ENCODE measurements at regions of chr18 and their contacts with region 1.

Region 1: DNA sequence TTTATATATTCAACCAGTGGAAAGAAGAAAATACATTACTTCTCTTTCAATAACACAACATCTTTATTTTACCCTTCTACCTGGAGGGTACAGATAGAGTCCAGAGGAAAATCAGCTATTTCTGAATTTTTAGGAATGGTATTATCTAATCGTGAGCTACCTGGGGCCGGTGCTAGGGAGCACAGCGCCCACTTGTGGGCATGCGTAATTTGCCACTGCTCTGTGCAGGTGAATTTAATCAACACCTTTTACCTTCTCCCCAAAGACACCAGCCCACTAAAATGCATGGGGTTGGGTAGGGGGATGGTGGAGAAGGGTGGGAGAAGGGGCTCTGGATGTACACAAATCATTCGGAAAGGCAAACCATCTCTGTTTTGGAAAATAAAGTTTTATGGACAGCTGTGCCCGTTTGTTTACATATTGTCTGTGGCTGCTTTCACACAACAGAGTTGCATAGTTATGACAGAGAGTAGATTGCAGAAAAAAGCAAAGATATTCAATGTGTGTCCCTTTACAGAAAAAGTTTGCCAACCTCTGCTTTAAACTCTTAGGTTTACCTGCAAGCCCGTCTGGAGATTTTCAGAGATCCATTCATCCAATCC is 51.5 kb upstream of the DCC start:
- DNase-seq: peak; percentile 33
- H3K4me3 Mint-ChIP-seq: no peak overlapping the region
- H3K27ac Mint-ChIP-seq: no peak overlapping the region
- H3K4me1 Mint-ChIP-seq: no peaks in the 10 kb centered on the region
- H3K27me3 Mint-ChIP-seq: no peaks in the 10 kb centered on the region

Region 2: DNA sequence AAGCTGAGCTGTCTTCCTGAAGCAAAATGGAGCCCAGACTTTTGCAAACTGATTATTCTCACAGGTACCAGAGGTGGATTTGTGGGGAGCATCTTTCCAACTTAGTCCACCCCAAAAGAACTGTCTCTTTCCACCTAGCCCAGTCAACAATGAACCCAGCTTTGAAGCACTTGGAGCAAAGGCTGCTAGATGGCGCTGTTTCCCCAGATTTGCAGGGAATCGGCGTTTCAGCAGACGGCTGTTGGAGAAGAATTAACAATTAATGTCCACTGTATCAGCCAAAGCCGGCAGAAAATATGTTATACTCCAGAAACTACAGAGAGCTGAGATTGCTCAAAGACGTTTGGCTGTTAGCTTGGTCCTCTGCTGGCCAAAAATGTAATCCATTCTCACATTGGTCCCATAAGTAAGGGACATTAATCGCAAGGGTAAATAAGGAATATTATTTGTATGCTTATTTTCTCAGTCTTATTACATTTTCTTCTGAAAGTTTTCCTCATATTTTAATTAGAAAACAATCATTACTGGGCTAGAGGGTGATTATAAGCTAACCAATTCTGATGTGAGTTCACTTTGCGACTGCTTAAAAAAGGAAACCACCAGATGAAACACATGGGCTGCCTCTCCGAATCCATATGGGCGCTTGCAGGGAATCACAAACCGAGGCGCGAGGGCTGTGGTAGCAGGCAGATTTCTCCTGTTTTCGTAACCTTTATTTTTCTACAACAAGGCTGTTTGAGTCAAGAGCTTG is 667.2 kb before region 1 on chr18:
- CTCF ChIA-PET with region 1: no interaction called
- intact Hi-C with region 1: loop called (anchors 2 kb)
- DNase-seq: peak; percentile 63
- H3K4me3 Mint-ChIP-seq: no peak overlapping the region
- H3K27ac Mint-ChIP-seq: no peak overlapping the region
- H3K4me1 Mint-ChIP-seq: no peaks in the 10 kb centered on the region
- H3K27me3 Mint-ChIP-seq: peaks cover 21% of the 10 kb centered on the region

Region 3: DNA sequence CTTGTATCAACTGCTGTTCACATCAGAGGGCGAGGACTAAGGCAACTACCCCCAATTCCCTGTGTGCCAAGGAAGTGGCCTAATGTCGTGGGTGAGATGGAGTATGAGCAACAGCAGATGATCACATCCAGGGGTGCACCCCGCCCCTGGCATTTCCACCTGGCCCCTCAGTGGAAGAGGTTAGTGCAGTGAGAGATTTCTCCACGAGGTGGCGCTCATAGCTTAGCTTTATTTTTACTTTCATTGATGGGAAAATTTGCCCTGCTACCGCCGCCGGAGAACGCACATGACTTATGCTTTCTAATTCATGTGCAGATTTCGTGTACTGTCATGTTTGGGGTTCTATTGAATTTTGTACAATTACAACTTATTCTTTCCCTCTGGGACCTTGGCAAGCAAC is 620.4 kb before region 1 on chr18:
- CTCF ChIA-PET with region 1: interaction called, 3 read pairs
- intact Hi-C with region 1: loop called (anchors 1 kb)
- DNase-seq: peak; percentile 75
- H3K4me3 Mint-ChIP-seq: no peak overlapping the region
- H3K27ac Mint-ChIP-seq: no peak overlapping the region
- H3K4me1 Mint-ChIP-seq: no peaks in the 10 kb centered on the region
- H3K27me3 Mint-ChIP-seq: peaks cover 29% of the 10 kb centered on the region

Measured in activated naive CD4-positive, alpha-beta T cell treated with anti-CD3 and anti-CD28 coated beads for 36 hours (primary cell).